ENCODE measurements at regions of chr22 and their contacts with region 1.

Region 1: DNA sequence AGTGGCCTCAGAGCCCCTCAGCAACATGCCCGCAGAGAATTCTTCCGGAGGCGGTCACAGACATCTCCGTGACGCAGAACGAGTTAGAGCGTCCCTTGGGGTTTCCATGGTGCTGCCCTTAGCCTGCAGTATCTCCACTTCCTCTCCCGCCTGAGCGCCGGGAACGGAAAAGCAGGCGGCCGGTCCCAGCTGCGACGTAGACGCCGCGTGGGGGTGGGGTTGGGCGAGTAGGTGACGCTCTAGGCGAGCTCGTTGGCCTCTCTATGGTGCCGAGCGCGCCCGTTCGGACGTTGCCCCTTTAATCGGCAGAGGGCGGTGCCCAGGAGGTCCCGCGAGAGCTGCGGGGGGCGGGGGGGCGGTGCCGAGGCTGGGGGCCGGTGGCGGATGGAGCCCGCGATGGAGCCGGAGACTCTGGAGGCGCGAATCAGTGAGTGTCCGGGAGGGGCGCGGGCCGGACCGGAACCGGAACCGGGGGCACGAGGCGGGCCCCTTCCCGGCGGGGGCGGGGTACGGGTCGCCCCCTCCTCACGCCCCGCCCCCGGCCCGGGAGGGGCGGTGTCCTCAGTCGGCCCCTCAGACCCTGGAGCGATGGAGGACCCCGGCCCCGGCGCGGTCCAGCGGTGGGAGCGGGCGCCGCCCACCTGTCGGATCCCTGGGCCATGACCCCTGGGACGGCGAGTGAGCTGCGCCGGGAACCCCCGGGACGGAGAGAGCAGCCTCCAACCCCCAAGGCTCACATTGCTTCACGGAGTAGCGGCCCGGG is at the start of gene GGA1:
- DNase-seq: peak; percentile 99
- ATAC-seq: peak; percentile 82
- H3K4me3 Mint-ChIP-seq: peak within 1 kb of the TSS; percentile 91
- H3K27ac Mint-ChIP-seq: peak within 1 kb of the TSS; percentile 94
- H3K4me1 Mint-ChIP-seq: peaks cover 49% of the 10 kb centered on the region
- H3K27me3 Mint-ChIP-seq: no peaks in the 10 kb centered on the region
- CTCF ChIP-seq: no peak
- total RNA-seq, gene GGA1: 59.7 to 62.8 TPM

Region 2: DNA sequence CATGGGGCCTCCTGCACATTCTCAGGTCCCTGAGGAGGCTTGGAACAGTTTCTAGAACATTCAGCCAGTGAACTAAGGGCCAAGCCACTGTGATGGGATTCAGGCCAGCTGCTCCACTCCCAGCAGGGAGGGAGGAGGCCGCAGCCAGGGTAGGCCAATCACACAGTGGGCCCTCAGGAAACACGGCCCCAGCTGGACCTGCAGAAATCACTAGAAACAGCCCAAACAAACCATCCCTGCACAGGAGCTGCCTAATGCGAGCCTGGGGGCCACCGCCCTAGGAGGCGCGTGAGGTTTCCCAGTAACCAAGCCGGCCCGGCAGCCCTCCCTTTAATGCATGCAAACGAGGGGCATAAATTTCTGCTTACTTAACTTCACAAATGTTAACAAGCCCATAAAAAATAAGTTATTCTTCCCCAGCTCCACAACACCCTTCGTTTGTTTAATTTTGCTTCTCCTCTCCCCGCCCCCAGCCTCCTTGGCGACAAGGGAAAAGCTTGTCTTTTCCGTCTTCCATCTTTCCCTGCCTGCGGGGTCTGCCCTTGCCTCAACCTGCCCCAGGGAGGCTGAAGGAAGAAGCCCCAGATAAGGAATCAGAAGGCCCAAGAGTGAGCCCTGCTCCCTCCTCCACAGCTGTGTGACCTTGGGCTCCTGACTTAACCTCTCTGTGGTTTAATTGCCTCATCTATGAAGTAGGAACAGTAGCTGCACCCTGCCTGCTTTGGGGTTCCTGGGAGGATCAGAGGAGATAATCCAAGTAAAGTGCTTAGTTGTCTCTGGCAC is 207.1 kb before region 1 on chr22:
- CTCF ChIA-PET with region 1: no interaction called
- POLR2A ChIA-PET with region 1: no interaction called
- intact Hi-C with region 1: no loop called
- DNase-seq: no peak
- ATAC-seq: no peak
- H3K4me3 Mint-ChIP-seq: no peak overlapping the region
- H3K27ac Mint-ChIP-seq: no peak overlapping the region
- H3K4me1 Mint-ChIP-seq: no peaks in the 10 kb centered on the region
- H3K27me3 Mint-ChIP-seq: no peaks in the 10 kb centered on the region
- CTCF ChIP-seq: no peak

Region 3: GRCh38 chr22:37476389-37477329 is 132.0 kb before region 1 on chr22:
- CTCF ChIA-PET with region 1: no interaction called
- POLR2A ChIA-PET with region 1: no interaction called
- intact Hi-C with region 1: no loop called
- DNase-seq: no peak
- ATAC-seq: no peak
- H3K4me3 Mint-ChIP-seq: no peak overlapping the region
- H3K27ac Mint-ChIP-seq: peak overlapping the region; percentile 34
- H3K4me1 Mint-ChIP-seq: peaks cover 12% of the 10 kb centered on the region
- H3K27me3 Mint-ChIP-seq: no peaks in the 10 kb centered on the region
- CTCF ChIP-seq: no peak

Region 4: GRCh38 chr22:37538590-37539357 is 69.9 kb before region 1 on chr22:
- CTCF ChIA-PET with region 1: interaction called, 16 read pairs
- POLR2A ChIA-PET with region 1: no interaction called
- intact Hi-C with region 1: no loop called
- DNase-seq: peak; percentile 95
- ATAC-seq: peak; percentile 93
- H3K4me3 Mint-ChIP-seq: no peak overlapping the region
- H3K27ac Mint-ChIP-seq: peak overlapping the region; percentile 46
- H3K4me1 Mint-ChIP-seq: peaks cover 41% of the 10 kb centered on the region
- H3K27me3 Mint-ChIP-seq: peaks cover 27% of the 10 kb centered on the region
- CTCF ChIP-seq: peak; percentile 94

Region 5: DNA sequence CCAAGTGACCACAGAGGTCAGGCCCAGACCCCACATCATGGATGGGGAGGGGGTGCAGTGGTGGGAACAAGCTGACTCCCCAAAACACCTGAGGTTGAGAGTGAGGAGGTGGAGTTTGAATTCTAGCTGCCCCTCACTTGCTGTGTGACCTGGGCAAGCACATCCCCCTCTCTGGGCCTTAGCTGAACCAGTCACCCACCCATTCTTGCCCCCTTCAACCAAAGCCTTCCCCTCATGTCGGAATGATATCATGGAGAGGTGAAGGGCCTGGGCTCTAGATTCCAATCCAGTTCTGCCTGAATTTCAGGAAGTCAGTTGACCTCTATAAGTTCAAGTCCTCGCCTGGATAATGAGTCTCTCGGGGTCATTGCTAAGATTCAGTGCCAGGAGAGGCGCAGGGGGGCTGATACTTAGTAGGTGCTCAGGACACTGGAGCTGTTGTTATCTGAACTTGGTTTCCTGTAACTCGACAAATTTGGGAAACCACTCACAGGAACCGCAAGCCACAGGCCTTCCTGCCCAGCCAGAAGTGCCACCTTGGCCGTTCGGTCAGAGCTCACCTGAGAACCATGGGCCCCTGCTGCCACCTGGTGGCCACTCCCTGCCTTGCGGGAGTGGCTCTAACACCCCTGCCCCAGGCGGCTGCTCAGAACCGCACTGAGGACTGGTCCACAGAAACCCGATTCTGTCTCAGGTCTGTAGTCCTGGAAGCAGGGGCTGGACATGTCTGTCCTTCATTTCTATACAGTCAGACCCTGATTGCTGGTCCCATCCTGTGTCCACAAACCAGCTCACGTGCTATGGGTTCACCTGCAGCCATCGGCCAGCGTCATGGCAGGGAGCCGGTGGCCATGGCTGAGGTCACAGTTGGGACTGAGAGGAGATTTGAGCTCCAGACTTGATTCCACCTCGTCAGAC is 41.5 kb before region 1 on chr22:
- CTCF ChIA-PET with region 1: interaction called, 41 read pairs
- POLR2A ChIA-PET with region 1: interaction called, 4 read pairs
- intact Hi-C with region 1: no loop called
- DNase-seq: peak; percentile 97
- ATAC-seq: peak; percentile 89
- H3K4me3 Mint-ChIP-seq: peak overlapping the region; percentile 49
- H3K27ac Mint-ChIP-seq: peak overlapping the region; percentile 85
- H3K4me1 Mint-ChIP-seq: peaks cover 26% of the 10 kb centered on the region
- H3K27me3 Mint-ChIP-seq: peaks cover 18% of the 10 kb centered on the region
- CTCF ChIP-seq: peak; percentile 92

Region 6: GRCh38 chr22:37623075-37624016 is 14.7 kb after region 1 on chr22:
- CTCF ChIA-PET with region 1: interaction called, 1,770 read pairs
- POLR2A ChIA-PET with region 1: interaction called, 30 read pairs
- intact Hi-C with region 1: no loop called
- DNase-seq: peak; percentile 90
- ATAC-seq: peak; percentile 84
- H3K4me3 Mint-ChIP-seq: no peak overlapping the region
- H3K27ac Mint-ChIP-seq: peak overlapping the region; percentile 90
- H3K4me1 Mint-ChIP-seq: peaks cover 48% of the 10 kb centered on the region
- H3K27me3 Mint-ChIP-seq: no peaks in the 10 kb centered on the region
- CTCF ChIP-seq: peak; percentile 81

Region 7: GRCh38 chr22:37658133-37659065 is 49.7 kb after region 1 on chr22 and contains the start of gene PDXP:
- CTCF ChIA-PET with region 1: interaction called, 1,770 read pairs
- POLR2A ChIA-PET with region 1: interaction called, 3 read pairs
- intact Hi-C with region 1: no loop called
- DNase-seq: peak; percentile 98
- ATAC-seq: peak; percentile 97
- H3K4me3 Mint-ChIP-seq: peak within 1 kb of the TSS; percentile 89
- H3K27ac Mint-ChIP-seq: peak within 1 kb of the TSS; percentile 95
- H3K4me1 Mint-ChIP-seq: peaks cover 39% of the 10 kb centered on the region
- H3K27me3 Mint-ChIP-seq: no peaks in the 10 kb centered on the region
- CTCF ChIP-seq: no peak
- total RNA-seq, gene PDXP: 51.3 to 51.5 TPM

Region 8: DNA sequence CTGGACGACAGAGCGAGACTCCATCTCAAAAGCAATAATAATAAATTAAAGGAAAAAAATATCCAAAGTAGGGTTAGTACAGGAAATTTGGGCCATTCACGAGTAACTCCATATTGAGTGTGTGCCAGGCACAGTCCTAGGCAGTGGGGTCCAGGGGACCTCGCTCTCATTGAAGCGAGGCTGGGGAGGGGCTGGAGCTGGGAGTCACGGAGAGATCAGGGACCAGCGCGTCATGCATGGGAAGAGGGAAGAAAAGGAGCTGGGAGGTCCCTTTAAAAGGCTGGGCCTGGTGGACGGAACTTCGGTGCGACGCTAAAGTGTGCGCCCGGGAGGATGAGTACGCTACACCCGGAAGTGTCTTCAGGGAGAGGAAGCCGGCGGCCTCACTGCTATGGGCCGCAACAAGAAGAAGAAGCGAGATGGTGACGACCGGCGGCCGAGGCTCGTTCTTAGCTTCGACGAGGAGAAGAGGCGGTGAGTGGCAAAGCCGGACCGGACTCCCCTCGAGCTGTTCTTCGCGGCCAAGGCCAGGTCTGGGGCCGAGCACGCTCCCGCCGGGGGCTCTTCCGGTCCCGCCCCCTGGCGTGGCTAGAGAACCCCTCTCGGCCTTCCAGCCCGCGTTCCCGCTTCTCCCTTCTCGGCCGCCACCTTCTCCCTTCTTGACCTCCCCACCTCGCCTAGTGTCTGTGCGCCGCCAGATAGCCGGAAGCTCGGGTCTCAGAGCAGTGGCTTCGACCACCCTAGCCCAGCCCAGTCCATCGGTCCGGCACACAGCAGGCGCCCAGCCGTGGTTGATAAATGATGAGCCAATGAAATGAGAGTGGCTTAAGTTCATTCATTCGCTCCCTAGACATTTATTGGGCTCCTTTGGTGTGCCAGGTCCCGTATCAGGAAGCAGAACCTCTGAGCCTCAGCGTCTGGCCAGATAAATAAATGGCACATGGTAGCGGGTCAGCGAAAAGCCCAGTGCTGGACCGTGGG is 77.6 kb after region 1 on chr22 and contains the start of gene NOL12:
- CTCF ChIA-PET with region 1: interaction called, 1,770 read pairs
- POLR2A ChIA-PET with region 1: interaction called, 10 read pairs
- intact Hi-C with region 1: no loop called
- DNase-seq: peak; percentile 79
- ATAC-seq: peak; percentile 88
- H3K4me3 Mint-ChIP-seq: peak within 1 kb of the TSS; percentile 99
- H3K27ac Mint-ChIP-seq: peak within 1 kb of the TSS; percentile 96
- H3K4me1 Mint-ChIP-seq: peaks cover 26% of the 10 kb centered on the region
- H3K27me3 Mint-ChIP-seq: no peaks in the 10 kb centered on the region
- CTCF ChIP-seq: no peak
- total RNA-seq, gene NOL12: 36.8 to 38.8 TPM

Region 9: GRCh38 chr22:37716708-37717107 is 108.0 kb after region 1 on chr22:
- CTCF ChIA-PET with region 1: no interaction called
- POLR2A ChIA-PET with region 1: no interaction called
- intact Hi-C with region 1: no loop called
- DNase-seq: no peak
- ATAC-seq: no peak
- H3K4me3 Mint-ChIP-seq: no peak overlapping the region
- H3K27ac Mint-ChIP-seq: no peak overlapping the region
- H3K4me1 Mint-ChIP-seq: no peaks in the 10 kb centered on the region
- H3K27me3 Mint-ChIP-seq: no peaks in the 10 kb centered on the region
- CTCF ChIP-seq: no peak

Measured in activated CD8-positive, alpha-beta T cell treated with anti-CD3 and anti-CD28 coated beads for 36 hours (primary cell).